ENCODE measurements at regions of chr4 and their contacts with region 1.

Region 1: GRCh38 chr4:114386637-114387233 is 211.9 kb upstream of the UGT8 start:
- DNase-seq: peak; percentile 5
- ATAC-seq: peak; percentile 35; the same call in 2 of the 3 replicates
- H3K4me3 ChIP-seq: no peak overlapping the region
- H3K27ac ChIP-seq: no peak overlapping the region
- H3K4me1 ChIP-seq: no peaks in the 10 kb centered on the region
- H3K27me3 ChIP-seq: no peaks in the 10 kb centered on the region
- CTCF ChIP-seq: peak; percentile 66
- EP300 ChIP-seq: no peak
- POLR2A ChIP-seq: no peak
- RAD21 ChIP-seq: no peak

Region 2: GRCh38 chr4:114132830-114133229 is 253.9 kb before region 1 on chr4:
- CTCF ChIA-PET with region 1: no interaction called
- POLR2A ChIA-PET with region 1: no interaction called
- in situ Hi-C with region 1: no loop called
- intact Hi-C with region 1: loop called (anchors 1 kb)
- DNase-seq: no peak
- ATAC-seq: peak; percentile 61; the same call in 2 of the 3 replicates
- H3K4me3 ChIP-seq: no peak overlapping the region
- H3K27ac ChIP-seq: no peak overlapping the region
- H3K4me1 ChIP-seq: no peaks in the 10 kb centered on the region
- H3K27me3 ChIP-seq: no peaks in the 10 kb centered on the region; a peak in 1 of 5 replicates
- CTCF ChIP-seq: no peak
- EP300 ChIP-seq: no peak
- POLR2A ChIP-seq: no peak
- RAD21 ChIP-seq: no peak

Region 3: DNA sequence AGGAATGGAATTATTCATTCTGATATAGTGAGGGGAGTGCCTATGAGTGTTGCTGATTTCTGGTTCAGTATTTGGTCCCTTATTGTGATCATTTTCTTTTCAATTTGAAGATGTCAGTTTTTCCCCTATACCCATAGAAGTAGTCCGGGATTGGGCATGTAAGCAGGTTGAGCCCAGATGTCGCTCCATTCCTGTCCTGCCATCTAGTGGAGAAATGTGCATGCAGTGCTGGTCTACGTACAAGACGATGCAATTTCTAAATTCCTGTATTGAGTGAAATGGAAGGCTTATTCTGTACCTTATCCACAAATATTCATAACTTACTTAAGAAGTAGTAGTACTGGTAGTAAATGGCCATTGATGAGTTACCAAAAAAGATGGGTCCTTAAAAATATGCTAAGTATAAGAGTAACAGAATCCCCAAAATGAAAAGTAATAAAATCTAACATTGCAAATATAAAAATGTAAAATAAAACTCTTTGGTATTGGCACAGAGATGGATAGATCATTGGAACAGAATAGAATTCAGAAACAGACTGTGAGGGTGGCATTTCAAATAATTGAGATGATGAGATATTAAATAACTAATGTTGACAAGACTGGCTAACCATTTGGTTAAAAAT is 272.8 kb after region 1 on chr4:
- CTCF ChIA-PET with region 1: interaction called, 31 read pairs
- POLR2A ChIA-PET with region 1: no interaction called
- in situ Hi-C with region 1: loop called (anchors 10 kb)
- intact Hi-C with region 1: loop called (anchors 1 kb)
- DNase-seq: peak; percentile 42
- ATAC-seq: peak; percentile 99
- H3K4me3 ChIP-seq: no peak overlapping the region
- H3K27ac ChIP-seq: no peak overlapping the region
- H3K4me1 ChIP-seq: no peaks in the 10 kb centered on the region
- H3K27me3 ChIP-seq: no peaks in the 10 kb centered on the region
- CTCF ChIP-seq: peak; percentile 82
- EP300 ChIP-seq: no peak
- POLR2A ChIP-seq: no peak
- RAD21 ChIP-seq: 0 out of 2 replicates have a peak, but pooled peaks have one; percentile 24

Region 4: GRCh38 chr4:114694770-114695169 is 308.0 kb after region 1 on chr4:
- CTCF ChIA-PET with region 1: interaction called, 22 read pairs
- POLR2A ChIA-PET with region 1: no interaction called
- in situ Hi-C with region 1: loop called (anchors 5 kb)
- intact Hi-C with region 1: loop called (anchors 1 kb)
- DNase-seq: peak; percentile 12
- ATAC-seq: no peak
- H3K4me3 ChIP-seq: no peak overlapping the region
- H3K27ac ChIP-seq: no peak overlapping the region
- H3K4me1 ChIP-seq: no peaks in the 10 kb centered on the region
- H3K27me3 ChIP-seq: no peaks in the 10 kb centered on the region
- CTCF ChIP-seq: peak; percentile 57
- EP300 ChIP-seq: no peak
- POLR2A ChIP-seq: no peak
- RAD21 ChIP-seq: no peak

Region 5: DNA sequence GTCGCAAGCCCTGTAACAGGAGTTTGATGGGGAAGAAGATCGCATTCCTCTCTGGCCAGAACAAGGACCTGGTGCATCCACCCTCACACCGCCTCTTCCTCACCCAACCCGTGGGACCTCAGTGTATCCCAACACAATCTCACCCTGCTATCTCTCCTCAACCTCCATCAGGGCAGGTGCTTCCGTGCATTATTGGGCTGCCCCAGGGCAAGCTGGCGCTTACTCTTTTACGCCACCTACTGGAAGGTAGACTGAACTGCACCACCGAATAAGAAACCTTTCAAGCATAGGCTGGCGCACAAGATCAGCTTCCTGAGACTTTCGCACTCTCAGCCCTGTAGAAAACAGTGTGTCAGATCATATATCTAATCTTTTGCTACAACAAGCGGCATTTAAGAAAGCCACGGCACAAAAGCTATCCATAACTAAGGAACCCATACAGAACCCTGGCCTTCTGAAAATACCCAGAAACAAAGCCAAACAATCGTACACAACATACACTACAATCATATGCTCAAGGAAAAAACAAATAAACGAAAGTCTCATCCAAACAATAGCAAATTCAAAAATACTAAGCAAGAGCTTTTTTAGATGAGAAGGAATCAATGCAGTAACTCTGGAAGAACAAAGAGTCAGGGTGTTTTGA is 421.1 kb after region 1 on chr4:
- CTCF ChIA-PET with region 1: no interaction called
- POLR2A ChIA-PET with region 1: no interaction called
- in situ Hi-C with region 1: loop called (anchors 10 kb)
- intact Hi-C with region 1: loop called (anchors 5 kb)
- DNase-seq: peak; percentile 42
- ATAC-seq: peak; percentile 99
- H3K4me3 ChIP-seq: no peak overlapping the region
- H3K27ac ChIP-seq: no peak overlapping the region
- H3K4me1 ChIP-seq: no peaks in the 10 kb centered on the region
- H3K27me3 ChIP-seq: no peaks in the 10 kb centered on the region
- CTCF ChIP-seq: peak; percentile 85
- EP300 ChIP-seq: no peak
- POLR2A ChIP-seq: no peak
- RAD21 ChIP-seq: no peak

Measured in HepG2 (cell line).